CD8-positive, alpha-beta T cell (primary cell): ENCODE measurements at regions of chr6 and their contacts with region 1.

Region 1: DNA sequence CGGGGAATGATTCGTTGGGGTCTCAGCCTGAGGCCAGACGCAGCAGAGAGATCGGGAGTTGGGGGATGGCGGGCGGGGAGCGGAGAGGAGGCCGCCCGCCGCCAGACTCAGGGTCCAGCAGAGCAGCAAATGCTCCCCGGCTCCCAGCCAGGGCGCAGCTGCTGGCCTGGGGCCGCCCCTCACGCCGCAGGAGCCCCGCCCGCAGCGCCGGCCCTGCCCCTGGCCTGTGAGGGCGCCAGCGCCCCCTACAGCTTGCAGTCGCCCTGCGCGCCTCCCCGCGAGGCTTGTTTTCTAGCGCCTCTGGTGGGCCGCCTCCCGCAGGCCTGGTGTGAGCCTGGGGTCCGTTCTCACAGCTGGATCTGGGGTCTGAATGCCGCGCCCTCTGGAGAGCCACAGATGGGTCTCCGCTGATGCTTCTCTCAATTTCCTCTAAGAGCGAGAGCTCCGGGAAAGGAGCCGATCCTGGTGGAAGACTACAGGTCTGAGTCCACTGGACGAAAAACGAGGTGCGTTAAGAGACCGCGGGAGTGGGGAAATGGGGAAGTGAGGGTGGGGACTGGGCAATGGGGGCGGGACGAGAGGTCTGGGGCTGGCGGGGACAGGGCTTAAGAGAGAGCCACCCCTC is 29.9 kb downstream of the TRIM38 start:
- DNase-seq: peak; percentile 87 to 97 (median 94)
- ATAC-seq: peak; percentile 96
- H3K4me3 ChIP-seq: peak overlapping the region; percentile 62 to 85
- H3K4me3 Mint-ChIP-seq: peak overlapping the region; percentile 96
- H3K27ac ChIP-seq: peak overlapping the region; percentile 63 to 81
- H3K27ac Mint-ChIP-seq: peak overlapping the region; percentile 96
- H3K4me1 ChIP-seq: peaks cover 3% of the 10 kb centered on the region
- H3K4me1 Mint-ChIP-seq: peaks cover 32% of the 10 kb centered on the region
- H3K27me3 ChIP-seq: no peaks in the 10 kb centered on the region
- H3K27me3 Mint-ChIP-seq: no peaks in the 10 kb centered on the region
- CTCF ChIP-seq: peak; percentile 100

Region 2: GRCh38 chr6:25717866-25718740 is 274.4 kb before region 1 on chr6:
- CTCF ChIA-PET with region 1: interaction called, 15 read pairs
- POLR2A ChIA-PET with region 1: interaction called, 3 read pairs
- intact Hi-C with region 1: loop called in 1 of 2 experiments (anchors 2 kb)
- DNase-seq: peak in 2 of 9 experiments; percentile 23 to 33
- ATAC-seq: no peak
- H3K4me3 ChIP-seq: no peak overlapping the region
- H3K4me3 Mint-ChIP-seq: no peak overlapping the region
- H3K27ac ChIP-seq: no peak overlapping the region
- H3K27ac Mint-ChIP-seq: no peak overlapping the region
- H3K4me1 ChIP-seq: no peaks in the 10 kb centered on the region
- H3K4me1 Mint-ChIP-seq: no peaks in the 10 kb centered on the region
- H3K27me3 ChIP-seq: no peaks in the 10 kb centered on the region
- H3K27me3 Mint-ChIP-seq: peaks cover 14% of the 10 kb centered on the region
- CTCF ChIP-seq: peak; percentile 52

Region 3: DNA sequence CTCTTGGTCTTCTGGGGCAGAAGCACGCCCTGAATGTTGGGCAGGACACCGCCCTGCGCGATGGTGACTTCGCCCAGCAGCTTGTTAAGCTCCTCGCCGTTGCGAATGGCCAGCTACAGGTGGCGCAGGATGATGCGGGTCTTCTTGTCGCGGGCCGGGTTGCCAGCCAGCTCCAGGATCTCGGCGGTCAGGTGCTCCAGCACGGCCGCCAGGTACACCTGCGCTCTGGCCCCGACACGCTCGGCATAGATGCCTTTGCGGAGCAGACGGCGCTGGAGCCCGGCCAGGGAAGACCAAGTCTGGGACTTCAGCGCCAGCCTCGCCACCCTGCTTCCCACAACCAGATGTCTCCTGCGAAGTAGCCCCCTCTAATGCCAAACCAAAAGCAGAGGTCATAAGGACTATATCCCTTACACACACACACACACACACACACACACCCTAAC is 110.5 kb before region 1 on chr6:
- CTCF ChIA-PET with region 1: interaction called, 7 read pairs
- POLR2A ChIA-PET with region 1: no interaction called
- intact Hi-C with region 1: loop called in 1 of 2 experiments (anchors 5 kb)
- DNase-seq: peak in 6 of 9 experiments; percentile 5 to 71 (median 55)
- ATAC-seq: peak; percentile 85
- H3K4me3 ChIP-seq: peak overlapping the region in 1 of 2 experiments; percentile 42
- H3K4me3 Mint-ChIP-seq: peak overlapping the region; percentile 89
- H3K27ac ChIP-seq: no peak overlapping the region
- H3K27ac Mint-ChIP-seq: peak overlapping the region; percentile 87
- H3K4me1 ChIP-seq: no peaks in the 10 kb centered on the region
- H3K4me1 Mint-ChIP-seq: peaks cover 2% of the 10 kb centered on the region
- H3K27me3 ChIP-seq: no peaks in the 10 kb centered on the region
- H3K27me3 Mint-ChIP-seq: peaks cover 3% of the 10 kb centered on the region
- CTCF ChIP-seq: peak; percentile 33

Region 4: DNA sequence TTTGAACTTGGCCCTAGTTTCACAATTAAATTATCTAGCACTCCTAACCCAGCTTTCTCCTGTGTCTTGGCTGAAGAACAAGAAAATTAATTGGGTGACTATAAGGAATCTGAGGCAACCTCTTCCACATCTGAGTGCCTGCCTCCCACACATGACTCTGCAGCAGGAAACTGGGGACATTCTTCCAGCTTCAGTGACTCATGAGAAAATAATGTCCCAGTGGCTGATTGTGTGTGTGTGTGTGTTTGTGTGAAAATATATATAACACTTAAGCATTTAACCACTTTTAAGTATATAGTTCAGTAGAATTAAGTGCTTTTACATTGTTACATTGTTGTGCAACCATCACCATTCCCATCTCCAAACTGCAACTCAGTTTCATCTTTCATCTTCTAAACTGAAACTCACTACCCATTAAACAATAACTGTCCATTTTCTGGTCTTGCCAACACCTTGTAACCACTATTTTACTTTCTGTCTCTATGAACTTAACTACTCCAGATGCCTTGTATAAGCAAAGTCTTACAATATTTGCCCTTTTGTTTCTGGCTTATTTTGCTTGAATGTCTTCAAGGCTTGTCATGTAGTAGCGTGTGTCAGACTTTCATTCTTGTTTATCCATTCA is 21.2 kb before region 1 on chr6:
- CTCF ChIA-PET with region 1: interaction called, 23 read pairs
- POLR2A ChIA-PET with region 1: interaction called, 14 read pairs
- intact Hi-C with region 1: no loop called
- DNase-seq: no peak
- ATAC-seq: no peak
- H3K4me3 ChIP-seq: no peak overlapping the region
- H3K4me3 Mint-ChIP-seq: no peak overlapping the region
- H3K27ac ChIP-seq: no peak overlapping the region
- H3K27ac Mint-ChIP-seq: peak overlapping the region; percentile 15
- H3K4me1 ChIP-seq: peaks cover 26% of the 10 kb centered on the region
- H3K4me1 Mint-ChIP-seq: peaks cover 66% of the 10 kb centered on the region
- H3K27me3 ChIP-seq: no peaks in the 10 kb centered on the region
- H3K27me3 Mint-ChIP-seq: no peaks in the 10 kb centered on the region
- CTCF ChIP-seq: no peak

Region 5: DNA sequence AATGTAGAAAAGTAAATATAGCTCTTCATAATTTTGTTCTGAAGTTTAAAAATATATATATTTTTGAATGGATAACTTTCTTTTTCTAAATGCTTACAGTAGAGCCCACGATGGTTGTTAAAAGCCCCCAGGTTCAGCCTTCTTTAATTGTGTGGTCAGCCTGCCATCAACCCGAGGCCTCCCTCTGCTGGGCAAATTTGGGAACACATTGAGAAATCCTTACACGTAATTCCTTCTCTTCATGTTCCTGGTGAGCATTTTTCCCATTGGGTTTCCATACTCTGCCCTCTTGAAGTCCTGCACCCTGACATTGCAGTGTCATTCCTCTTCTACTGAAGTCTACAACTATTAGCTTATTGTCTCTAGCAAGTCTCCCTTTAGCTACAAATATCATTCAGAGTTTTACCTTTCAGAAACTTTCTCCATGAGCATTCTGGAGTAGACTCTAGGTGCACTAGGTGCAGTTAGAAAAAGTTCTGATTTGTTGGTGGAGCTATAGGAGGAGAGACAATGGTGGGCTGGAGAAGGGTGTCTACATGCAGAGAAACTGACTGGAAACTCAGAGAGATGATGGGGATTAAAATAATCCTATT is 10.7 kb after region 1 on chr6:
- CTCF ChIA-PET with region 1: interaction called, 51 read pairs
- POLR2A ChIA-PET with region 1: interaction called, 17 read pairs
- intact Hi-C with region 1: no loop called
- DNase-seq: peak in 7 of 9 experiments; percentile 24 to 71 (median 55)
- ATAC-seq: peak; percentile 72
- H3K4me3 ChIP-seq: no peak overlapping the region
- H3K4me3 Mint-ChIP-seq: no peak overlapping the region
- H3K27ac ChIP-seq: no peak overlapping the region
- H3K27ac Mint-ChIP-seq: no peak overlapping the region
- H3K4me1 ChIP-seq: no peaks in the 10 kb centered on the region
- H3K4me1 Mint-ChIP-seq: peaks cover 3% of the 10 kb centered on the region
- H3K27me3 ChIP-seq: no peaks in the 10 kb centered on the region
- H3K27me3 Mint-ChIP-seq: no peaks in the 10 kb centered on the region
- CTCF ChIP-seq: peak; percentile 94

Region 6: DNA sequence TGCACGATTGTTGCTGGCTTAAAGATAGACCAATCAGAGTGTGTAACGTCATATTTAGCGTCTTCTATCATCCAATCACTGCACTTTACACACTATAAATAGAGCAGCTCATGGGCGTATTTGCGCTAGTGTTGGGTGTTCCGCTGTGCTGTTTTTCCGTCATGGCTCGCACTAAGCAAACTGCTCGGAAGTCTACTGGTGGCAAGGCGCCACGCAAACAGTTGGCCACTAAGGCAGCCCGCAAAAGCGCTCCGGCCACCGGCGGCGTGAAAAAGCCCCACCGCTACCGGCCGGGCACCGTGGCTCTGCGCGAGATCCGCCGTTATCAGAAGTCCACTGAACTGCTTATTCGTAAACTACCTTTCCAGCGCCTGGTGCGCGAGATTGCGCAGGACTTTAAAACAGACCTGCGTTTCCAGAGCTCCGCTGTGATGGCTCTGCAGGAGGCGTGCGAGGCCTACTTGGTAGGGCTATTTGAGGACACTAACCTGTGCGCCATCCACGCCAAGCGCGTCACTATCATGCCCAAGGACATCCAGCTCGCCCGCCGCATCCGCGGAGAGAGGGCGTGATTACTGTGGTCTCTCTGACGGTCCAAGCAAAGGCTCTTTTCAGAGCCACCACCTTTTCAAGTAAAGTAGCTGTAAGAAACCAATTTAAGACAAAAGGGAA is 27.9 kb after region 1 on chr6:
- CTCF ChIA-PET with region 1: interaction called, 43 read pairs
- POLR2A ChIA-PET with region 1: interaction called, 63 read pairs
- intact Hi-C with region 1: loop called (anchors 1 kb)
- DNase-seq: peak; percentile 69 to 95 (median 78)
- ATAC-seq: peak; percentile 47
- H3K4me3 ChIP-seq: peak overlapping the region; percentile 85 to 88
- H3K4me3 Mint-ChIP-seq: peak overlapping the region; percentile 88
- H3K27ac ChIP-seq: peak overlapping the region; percentile 95 to 98
- H3K27ac Mint-ChIP-seq: peak overlapping the region; percentile 99
- H3K4me1 ChIP-seq: peaks cover 10% of the 10 kb centered on the region
- H3K4me1 Mint-ChIP-seq: peaks cover 41% of the 10 kb centered on the region
- H3K27me3 ChIP-seq: no peaks in the 10 kb centered on the region
- H3K27me3 Mint-ChIP-seq: no peaks in the 10 kb centered on the region
- CTCF ChIP-seq: no peak